ENCODE measurements at regions of chr2 and their contacts with region 1.

Region 1: GRCh38 chr2:118221666-118222594 is 133.7 kb downstream of the INSIG2 start:
- DNase-seq: peak; percentile 26
- H3K4me3 Mint-ChIP-seq: no peak overlapping the region
- H3K27ac Mint-ChIP-seq: no peak overlapping the region
- H3K4me1 Mint-ChIP-seq: peaks cover 10% of the 10 kb centered on the region
- H3K27me3 Mint-ChIP-seq: peaks cover 51% of the 10 kb centered on the region

Region 2: DNA sequence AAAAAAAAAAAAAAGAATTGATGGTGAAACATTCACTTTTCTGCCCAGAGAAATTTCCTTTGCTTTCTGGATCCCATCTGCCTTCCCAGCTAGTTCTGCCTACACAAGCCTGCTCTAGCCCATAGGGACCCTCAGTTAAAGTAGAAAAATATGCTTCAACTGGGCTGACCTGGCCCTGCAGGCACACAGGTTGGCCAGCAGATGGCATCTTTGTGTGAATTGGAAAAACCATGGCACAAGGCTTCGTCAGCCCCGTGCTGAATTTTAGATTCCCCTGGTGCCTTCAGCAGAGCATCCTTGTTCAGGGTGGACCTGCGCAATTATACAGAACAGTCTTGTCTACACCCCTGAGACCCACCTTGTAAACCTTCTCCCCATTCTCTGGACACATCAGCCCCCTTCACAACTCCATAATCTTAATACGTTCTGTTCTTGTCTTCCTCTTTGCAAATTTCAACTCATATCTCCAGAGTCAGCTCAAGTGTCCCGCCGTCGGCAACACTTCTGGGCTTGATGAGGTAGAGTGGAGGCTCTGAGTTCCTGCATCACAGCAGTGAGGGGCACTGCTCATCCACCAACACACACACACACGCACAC is 19.1 kb before region 1 on chr2:
- CTCF ChIA-PET with region 1: interaction called, 11 read pairs
- POLR2A ChIA-PET with region 1: no interaction called
- intact Hi-C with region 1: loop called (anchors 2 kb)
- DNase-seq: peak; percentile 67
- H3K4me3 Mint-ChIP-seq: no peak overlapping the region
- H3K27ac Mint-ChIP-seq: no peak overlapping the region
- H3K4me1 Mint-ChIP-seq: peaks cover 4% of the 10 kb centered on the region
- H3K27me3 Mint-ChIP-seq: peaks cover 17% of the 10 kb centered on the region

Region 3: DNA sequence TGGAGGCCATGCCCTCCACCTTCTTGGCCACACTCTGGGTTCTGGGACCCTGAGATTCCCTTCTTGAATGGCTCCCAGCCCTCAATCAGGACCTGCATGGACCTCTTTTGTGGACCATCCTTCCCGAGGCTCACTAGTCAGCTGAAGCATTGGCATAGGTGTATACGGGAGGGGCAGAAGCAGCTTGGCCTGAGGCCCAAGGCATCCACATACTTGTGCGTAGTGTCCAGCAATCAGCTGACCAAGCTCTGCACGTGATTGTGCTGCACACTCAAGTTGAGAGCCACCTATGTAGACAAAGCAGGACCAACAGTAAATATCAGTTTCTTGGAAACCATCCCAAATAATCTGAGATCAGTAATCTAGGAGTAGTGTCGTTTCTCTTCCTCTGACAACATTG is 14.0 kb before region 1 on chr2:
- CTCF ChIA-PET with region 1: interaction called, 11 read pairs
- POLR2A ChIA-PET with region 1: no interaction called
- intact Hi-C with region 1: loop called (anchors 2 kb)
- DNase-seq: no peak
- H3K4me3 Mint-ChIP-seq: no peak overlapping the region
- H3K27ac Mint-ChIP-seq: no peak overlapping the region
- H3K4me1 Mint-ChIP-seq: peaks cover 3% of the 10 kb centered on the region
- H3K27me3 Mint-ChIP-seq: peaks cover 30% of the 10 kb centered on the region

Region 4: GRCh38 chr2:118309946-118310680 is 88.2 kb after region 1 on chr2:
- CTCF ChIA-PET with region 1: interaction called, 3 read pairs
- POLR2A ChIA-PET with region 1: interaction called, 3 read pairs
- intact Hi-C with region 1: loop called (anchors 1 kb)
- DNase-seq: peak; percentile 78
- H3K4me3 Mint-ChIP-seq: peak overlapping the region; percentile 79
- H3K27ac Mint-ChIP-seq: peak overlapping the region; percentile 88
- H3K4me1 Mint-ChIP-seq: peaks cover 8% of the 10 kb centered on the region
- H3K27me3 Mint-ChIP-seq: peaks cover 2% of the 10 kb centered on the region

Region 5: GRCh38 chr2:118477111-118477862 is 255.4 kb after region 1 on chr2:
- CTCF ChIA-PET with region 1: no interaction called
- POLR2A ChIA-PET with region 1: no interaction called
- intact Hi-C with region 1: loop called (anchors 10 kb)
- DNase-seq: no peak
- H3K4me3 Mint-ChIP-seq: no peak overlapping the region
- H3K27ac Mint-ChIP-seq: no peak overlapping the region
- H3K4me1 Mint-ChIP-seq: no peaks in the 10 kb centered on the region
- H3K27me3 Mint-ChIP-seq: peaks cover 2% of the 10 kb centered on the region

Region 6: DNA sequence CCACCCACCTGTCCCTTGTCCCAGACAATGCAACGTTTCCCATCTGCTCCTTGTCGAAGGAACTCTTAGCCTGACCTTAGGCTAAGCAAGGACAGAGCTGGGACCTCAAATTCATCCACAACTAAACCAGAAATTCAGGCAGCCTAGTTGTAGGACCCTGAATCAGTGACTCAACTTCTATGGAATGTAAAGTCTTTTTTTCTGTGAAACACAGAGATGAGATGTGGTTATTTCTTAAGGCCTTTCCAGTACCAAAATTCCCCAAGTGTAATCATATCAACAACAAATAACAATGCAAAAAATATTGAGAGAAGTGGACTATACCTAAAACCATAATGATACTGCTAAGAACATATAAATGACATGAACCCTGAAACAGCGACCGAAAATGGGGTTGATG is 578.8 kb after region 1 on chr2:
- CTCF ChIA-PET with region 1: no interaction called
- POLR2A ChIA-PET with region 1: no interaction called
- intact Hi-C with region 1: no loop called
- DNase-seq: no peak
- H3K4me3 Mint-ChIP-seq: no peak overlapping the region
- H3K27ac Mint-ChIP-seq: no peak overlapping the region
- H3K4me1 Mint-ChIP-seq: no peaks in the 10 kb centered on the region
- H3K27me3 Mint-ChIP-seq: peaks cover 18% of the 10 kb centered on the region

Region 7: GRCh38 chr2:118855451-118856279 is 633.7 kb after region 1 on chr2:
- CTCF ChIA-PET with region 1: interaction called, 58 read pairs
- POLR2A ChIA-PET with region 1: no interaction called
- intact Hi-C with region 1: loop called (anchors 1 kb)
- DNase-seq: peak; percentile 86
- H3K4me3 Mint-ChIP-seq: peak overlapping the region; percentile 32
- H3K27ac Mint-ChIP-seq: no peak overlapping the region
- H3K4me1 Mint-ChIP-seq: peaks cover 18% of the 10 kb centered on the region
- H3K27me3 Mint-ChIP-seq: peaks cover 74% of the 10 kb centered on the region